Mammary epithelial cell (primary cell): ENCODE measurements at regions of chrX and their contacts with region 1.

Region 1: DNA sequence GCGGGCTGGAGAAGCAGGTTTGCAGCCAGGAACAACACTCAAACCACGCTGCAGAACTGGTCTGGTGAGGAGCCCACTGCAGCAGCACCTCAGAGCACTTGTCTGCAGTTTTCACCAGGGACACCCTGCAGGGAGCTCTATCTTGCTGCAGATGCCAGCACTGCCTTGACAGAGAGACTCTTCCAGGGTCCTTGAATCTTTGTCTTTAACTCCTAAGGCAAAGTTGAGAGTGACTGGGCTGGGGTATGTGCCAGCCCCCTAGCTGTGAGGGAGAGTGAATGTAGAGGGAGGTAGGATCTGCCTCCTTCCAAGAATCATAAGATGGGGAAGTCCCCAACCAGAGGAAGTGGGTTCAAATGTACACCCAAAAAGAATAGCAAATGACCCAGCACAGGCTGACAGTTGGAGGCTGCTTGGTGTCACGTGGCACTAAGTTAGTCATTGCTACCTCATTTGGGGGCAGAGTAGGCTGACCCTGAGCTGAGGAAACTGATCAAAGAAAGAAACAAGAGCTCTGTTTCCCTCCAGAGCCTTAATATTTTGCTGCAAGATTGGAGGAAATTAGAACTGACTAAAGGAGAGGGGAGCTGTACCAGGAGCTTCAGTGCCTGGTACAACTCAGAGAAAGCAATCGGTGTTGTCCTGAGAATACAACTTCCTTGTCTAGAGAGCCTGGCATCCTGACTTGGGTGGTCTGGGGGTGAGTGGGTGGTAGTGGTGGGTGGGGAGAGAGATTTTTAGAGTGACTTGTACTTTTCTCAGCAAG is 28.2 kb upstream of the HUWE1 start:
- DNase-seq: peak; percentile 69
- H3K4me3 ChIP-seq: no peak overlapping the region
- H3K27ac ChIP-seq: peak overlapping the region; percentile 22
- H3K4me1 ChIP-seq: peaks cover 40% of the 10 kb centered on the region
- H3K27me3 ChIP-seq: no peaks in the 10 kb centered on the region
- CTCF ChIP-seq: peak in 1 of 2 donors; percentile 12

Region 2: DNA sequence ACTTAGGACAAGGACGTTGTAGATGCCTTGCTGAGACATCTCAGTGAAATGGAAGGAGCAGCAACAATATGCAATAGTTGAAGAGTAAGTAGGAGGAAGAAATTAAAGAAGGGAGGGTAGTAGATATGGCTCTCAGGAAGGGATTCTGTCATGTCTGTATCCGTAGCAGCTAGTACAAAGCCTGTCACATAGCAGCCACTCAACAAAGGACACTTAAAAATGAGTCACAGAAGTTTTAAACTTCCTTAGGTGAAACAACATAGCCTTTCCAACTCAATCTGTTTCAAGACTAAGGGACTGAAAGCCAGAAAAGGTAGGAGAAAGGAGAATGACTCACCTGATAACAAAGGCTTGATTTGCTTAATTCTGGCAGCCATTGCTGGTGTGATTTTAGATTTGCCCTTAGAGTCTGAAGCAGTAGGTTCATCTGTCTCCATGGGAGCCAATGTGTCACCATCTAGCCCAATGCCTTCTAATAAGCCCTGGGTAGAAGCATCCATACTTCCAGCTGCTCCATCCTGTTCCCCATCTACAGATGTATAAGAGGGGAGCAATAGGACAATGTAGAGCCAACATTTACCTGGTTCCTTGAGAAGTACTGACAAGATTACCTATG is 114.9 kb before region 1 on chrX:
- CTCF ChIA-PET with region 1: no interaction called
- dilution Hi-C with region 1: no loop called
- in situ Hi-C with region 1: no loop called
- intact Hi-C with region 1: no loop called
- DNase-seq: peak; percentile 16
- H3K4me3 ChIP-seq: no peak overlapping the region
- H3K27ac ChIP-seq: no peak overlapping the region
- H3K4me1 ChIP-seq: no peaks in the 10 kb centered on the region
- H3K27me3 ChIP-seq: peaks cover 2% of the 10 kb centered on the region
- CTCF ChIP-seq: no peak

Region 3: GRCh38 chrX:53729751-53730150 is 15.0 kb after region 1 on chrX:
- CTCF ChIA-PET with region 1: no interaction called
- dilution Hi-C with region 1: no loop called
- in situ Hi-C with region 1: no loop called
- intact Hi-C with region 1: loop called (anchors 1 kb)
- DNase-seq: no peak
- H3K4me3 ChIP-seq: no peak overlapping the region
- H3K27ac ChIP-seq: no peak overlapping the region
- H3K4me1 ChIP-seq: peaks cover 4% of the 10 kb centered on the region
- H3K27me3 ChIP-seq: no peaks in the 10 kb centered on the region
- CTCF ChIP-seq: no peak

Region 4: GRCh38 chrX:53895270-53895669 is 180.5 kb after region 1 on chrX:
- CTCF ChIA-PET with region 1: no interaction called
- dilution Hi-C with region 1: no loop called
- in situ Hi-C with region 1: no loop called
- intact Hi-C with region 1: no loop called
- DNase-seq: no peak
- H3K4me3 ChIP-seq: no peak overlapping the region
- H3K27ac ChIP-seq: no peak overlapping the region
- H3K4me1 ChIP-seq: no peaks in the 10 kb centered on the region
- H3K27me3 ChIP-seq: no peaks in the 10 kb centered on the region
- CTCF ChIP-seq: no peak

Region 5: DNA sequence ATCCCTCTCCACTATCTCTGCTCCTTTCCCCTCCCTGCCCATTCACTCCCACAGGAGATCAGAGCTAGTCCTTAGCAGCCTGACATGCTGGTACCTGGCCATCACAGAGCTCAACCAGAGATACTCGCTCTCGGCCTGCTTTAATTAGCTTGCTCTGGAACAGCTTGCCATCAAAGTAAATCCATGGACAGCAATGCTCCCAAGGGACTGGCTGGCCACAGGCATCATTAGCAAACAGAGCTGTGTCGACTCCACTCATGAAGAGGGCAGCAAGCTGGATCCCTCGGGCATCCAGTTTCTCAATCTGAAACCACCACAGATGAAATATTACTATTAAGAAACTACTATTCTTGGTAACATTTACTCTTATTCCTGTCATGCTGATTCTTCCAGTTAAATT is 372.9 kb after region 1 on chrX:
- CTCF ChIA-PET with region 1: no interaction called
- dilution Hi-C with region 1: no loop called
- in situ Hi-C with region 1: no loop called
- intact Hi-C with region 1: no loop called
- DNase-seq: no peak
- H3K4me3 ChIP-seq: no peak overlapping the region
- H3K27ac ChIP-seq: no peak overlapping the region
- H3K4me1 ChIP-seq: no peaks in the 10 kb centered on the region
- H3K27me3 ChIP-seq: no peaks in the 10 kb centered on the region
- CTCF ChIP-seq: no peak